GM12878 (cell line): ENCODE measurements at regions of chr10 and their contacts with region 1.

Region 1: GRCh38 chr10:107442035-107442505 is 277.6 kb upstream of the SORCS1 start:
- DNase-seq: peak; percentile 68
- ATAC-seq: peak; percentile 96
- H3K4me3 ChIP-seq: no peak overlapping the region
- H3K27ac ChIP-seq: no peak overlapping the region
- H3K4me1 ChIP-seq: peaks cover 19% of the 10 kb centered on the region; the same call in 1 of the 2 replicates
- H3K27me3 ChIP-seq: no peaks in the 10 kb centered on the region
- CTCF ChIP-seq: no peak
- EP300 ChIP-seq: peak; percentile 63 to 90
- POLR2A ChIP-seq: no peak
- RAD21 ChIP-seq: no peak; the same call in 1 of the 2 replicates

Region 2: DNA sequence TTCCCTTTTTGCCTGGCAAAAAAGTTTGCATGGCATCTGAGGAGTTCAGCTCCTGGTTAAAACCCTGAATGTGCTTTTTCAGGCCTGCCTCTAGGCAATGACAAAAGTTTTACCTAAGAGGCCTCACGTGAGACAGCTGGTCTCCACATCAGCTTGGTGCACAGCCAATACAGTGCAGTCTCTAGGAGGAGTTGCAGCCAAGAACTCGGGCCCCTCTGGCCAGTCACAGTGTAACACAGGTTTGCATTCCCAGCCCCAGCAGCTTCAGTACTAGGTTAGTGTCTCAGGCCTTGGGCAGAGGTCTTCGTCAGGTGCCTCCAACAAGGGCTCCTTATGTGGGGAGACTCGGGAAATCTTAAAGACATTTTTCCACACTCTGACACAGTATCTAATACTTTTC is 1049.3 kb before region 1 on chr10:
- CTCF ChIA-PET with region 1: no interaction called
- POLR2A ChIA-PET with region 1: no interaction called
- RAD21 ChIA-PET with region 1: no interaction called
- SMC1A ChIA-PET with region 1: no interaction called
- in situ Hi-C with region 1: no loop called
- intact Hi-C with region 1: no loop called
- DNase-seq: no peak
- ATAC-seq: peak; percentile 56
- H3K4me3 ChIP-seq: no peak overlapping the region
- H3K27ac ChIP-seq: no peak overlapping the region
- H3K4me1 ChIP-seq: no peaks in the 10 kb centered on the region
- H3K27me3 ChIP-seq: no peaks in the 10 kb centered on the region
- CTCF ChIP-seq: no peak
- EP300 ChIP-seq: no peak
- POLR2A ChIP-seq: no peak
- RAD21 ChIP-seq: no peak

Region 3: GRCh38 chr10:107418407-107418806 is 23.7 kb before region 1 on chr10:
- CTCF ChIA-PET with region 1: interaction called, 17 read pairs
- POLR2A ChIA-PET with region 1: interaction called, 4 read pairs
- RAD21 ChIA-PET with region 1: interaction called, 9 read pairs
- SMC1A ChIA-PET with region 1: interaction called, 11 read pairs
- in situ Hi-C with region 1: no loop called
- intact Hi-C with region 1: no loop called
- DNase-seq: peak; percentile 33
- ATAC-seq: peak; percentile 81
- H3K4me3 ChIP-seq: peak overlapping the region; percentile 4; the same call in 1 of the 2 replicates
- H3K27ac ChIP-seq: peak overlapping the region; percentile 53
- H3K4me1 ChIP-seq: peaks cover 21% of the 10 kb centered on the region
- H3K27me3 ChIP-seq: no peaks in the 10 kb centered on the region
- CTCF ChIP-seq: no peak
- EP300 ChIP-seq: no peak
- POLR2A ChIP-seq: no peak
- RAD21 ChIP-seq: no peak

Region 4: GRCh38 chr10:107425831-107426553 is 16.1 kb before region 1 on chr10:
- CTCF ChIA-PET with region 1: interaction called, 7 read pairs
- POLR2A ChIA-PET with region 1: no interaction called
- RAD21 ChIA-PET with region 1: interaction called, 16 read pairs
- SMC1A ChIA-PET with region 1: interaction called, 31 read pairs
- in situ Hi-C with region 1: no loop called
- intact Hi-C with region 1: no loop called
- DNase-seq: no peak
- ATAC-seq: peak; percentile 83
- H3K4me3 ChIP-seq: peak overlapping the region; percentile 22; the same call in 1 of the 2 replicates
- H3K27ac ChIP-seq: no peak overlapping the region
- H3K4me1 ChIP-seq: no peaks in the 10 kb centered on the region; the same call in 1 of the 2 replicates
- H3K27me3 ChIP-seq: no peaks in the 10 kb centered on the region
- CTCF ChIP-seq: no peak
- EP300 ChIP-seq: no peak
- POLR2A ChIP-seq: no peak
- RAD21 ChIP-seq: no peak

Region 5: GRCh38 chr10:107477266-107477665 is 35.2 kb after region 1 on chr10:
- CTCF ChIA-PET with region 1: interaction called, 3 read pairs
- POLR2A ChIA-PET with region 1: interaction called, 4 read pairs
- RAD21 ChIA-PET with region 1: interaction called, 23 read pairs
- SMC1A ChIA-PET with region 1: interaction called, 27 read pairs
- in situ Hi-C with region 1: no loop called
- intact Hi-C with region 1: no loop called
- DNase-seq: peak; percentile 45
- ATAC-seq: peak; percentile 82
- H3K4me3 ChIP-seq: peak overlapping the region; percentile 39; the same call in 1 of the 2 replicates
- H3K27ac ChIP-seq: peak overlapping the region; percentile 1; the same call in 1 of the 2 replicates
- H3K4me1 ChIP-seq: peaks cover 7% of the 10 kb centered on the region
- H3K27me3 ChIP-seq: no peaks in the 10 kb centered on the region
- CTCF ChIP-seq: no peak
- EP300 ChIP-seq: peak in 1 of 2 experiments; percentile 51; a peak in 1 of 4 replicates
- POLR2A ChIP-seq: no peak
- RAD21 ChIP-seq: no peak

Region 6: DNA sequence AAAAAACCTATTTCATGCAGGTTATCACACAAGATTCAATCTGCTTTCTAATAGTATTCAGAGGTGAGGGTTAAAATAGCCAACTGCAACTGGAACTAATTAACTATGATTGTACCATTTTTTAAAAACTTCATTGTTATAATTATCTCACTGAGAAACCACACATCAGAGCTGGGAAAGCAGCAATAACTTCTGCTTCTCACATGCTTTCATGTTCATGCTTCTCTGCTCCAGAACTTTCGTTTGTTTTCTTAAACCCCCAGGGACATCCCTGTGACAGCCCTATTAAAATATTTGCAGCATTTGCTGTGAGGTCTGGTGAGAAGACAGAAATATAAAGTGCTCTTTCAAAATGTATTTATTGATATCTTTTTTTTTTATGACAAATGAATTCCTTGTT is 111.4 kb after region 1 on chr10:
- CTCF ChIA-PET with region 1: interaction called, 6 read pairs
- POLR2A ChIA-PET with region 1: no interaction called
- RAD21 ChIA-PET with region 1: interaction called, 28 read pairs
- SMC1A ChIA-PET with region 1: interaction called, 44 read pairs
- in situ Hi-C with region 1: no loop called
- intact Hi-C with region 1: no loop called
- DNase-seq: peak; percentile 37
- ATAC-seq: peak; percentile 86
- H3K4me3 ChIP-seq: no peak overlapping the region
- H3K27ac ChIP-seq: no peak overlapping the region
- H3K4me1 ChIP-seq: no peaks in the 10 kb centered on the region
- H3K27me3 ChIP-seq: no peaks in the 10 kb centered on the region
- CTCF ChIP-seq: no peak
- EP300 ChIP-seq: peak in 1 of 2 experiments; percentile 71; a peak in 2 of 4 replicates
- POLR2A ChIP-seq: no peak
- RAD21 ChIP-seq: no peak

Region 7: GRCh38 chr10:107653832-107654287 is 211.8 kb after region 1 on chr10:
- CTCF ChIA-PET with region 1: no interaction called
- POLR2A ChIA-PET with region 1: interaction called, 4 read pairs
- RAD21 ChIA-PET with region 1: interaction called, 5 read pairs
- SMC1A ChIA-PET with region 1: interaction called, 12 read pairs
- in situ Hi-C with region 1: no loop called
- intact Hi-C with region 1: no loop called
- DNase-seq: peak; percentile 37
- ATAC-seq: peak; percentile 88
- H3K4me3 ChIP-seq: peak overlapping the region; percentile 62
- H3K27ac ChIP-seq: peak overlapping the region; percentile 41
- H3K4me1 ChIP-seq: 0 out of 2 replicates have a peak, but pooled peaks cover 6% of the 10 kb centered on the region
- H3K27me3 ChIP-seq: no peaks in the 10 kb centered on the region
- CTCF ChIP-seq: no peak
- EP300 ChIP-seq: no peak
- POLR2A ChIP-seq: no peak
- RAD21 ChIP-seq: no peak

Region 8: DNA sequence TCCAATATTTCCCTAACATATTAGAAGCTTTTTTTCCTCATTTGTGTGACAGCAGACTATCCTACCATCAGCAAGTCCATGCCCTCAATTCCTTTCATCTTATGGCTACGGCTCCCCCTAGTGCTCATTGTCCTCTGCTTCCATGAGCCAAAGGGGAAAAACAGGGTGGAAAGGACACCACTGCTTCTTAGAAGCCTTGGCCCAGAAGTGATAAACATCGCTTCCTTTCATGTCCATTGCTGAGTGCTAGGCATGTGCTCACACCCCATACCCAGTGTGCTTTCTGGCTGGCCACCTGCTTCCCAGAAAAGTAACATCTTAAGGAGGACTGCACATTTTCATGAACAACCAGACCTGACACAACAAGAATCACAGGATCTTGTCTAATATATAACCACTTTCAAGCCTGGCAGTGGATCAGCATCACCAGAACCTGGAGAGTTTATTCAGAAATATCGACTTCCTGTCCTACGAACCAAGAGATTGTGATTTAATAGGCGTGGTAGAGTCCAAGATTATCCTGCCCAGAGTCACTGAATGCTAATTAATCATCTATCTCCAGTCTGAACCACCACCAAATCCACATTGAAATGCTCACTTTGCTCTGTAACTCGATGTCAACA is 372.9 kb after region 1 on chr10:
- CTCF ChIA-PET with region 1: interaction called, 15 read pairs
- POLR2A ChIA-PET with region 1: no interaction called
- RAD21 ChIA-PET with region 1: interaction called, 4 read pairs
- SMC1A ChIA-PET with region 1: no interaction called
- in situ Hi-C with region 1: no loop called
- intact Hi-C with region 1: no loop called
- DNase-seq: peak; percentile 20
- ATAC-seq: peak; percentile 95
- H3K4me3 ChIP-seq: no peak overlapping the region
- H3K27ac ChIP-seq: no peak overlapping the region
- H3K4me1 ChIP-seq: no peaks in the 10 kb centered on the region
- H3K27me3 ChIP-seq: no peaks in the 10 kb centered on the region
- CTCF ChIP-seq: peak; percentile 59 to 81 (median 74)
- EP300 ChIP-seq: no peak
- POLR2A ChIP-seq: no peak
- RAD21 ChIP-seq: peak; percentile 87